ENCODE measurements at regions of chr15 and their contacts with region 1.

Region 1: GRCh38 chr15:90036343-90037210 is 35.5 kb downstream of the ZNF710 start:
- DNase-seq: no peak
- H3K4me3 ChIP-seq: no peak overlapping the region
- H3K27ac ChIP-seq: no peak overlapping the region
- H3K4me1 ChIP-seq: peaks cover 52% of the 10 kb centered on the region
- CTCF ChIP-seq: no peak

Region 2: GRCh38 chr15:90184786-90185569 is 148.4 kb after region 1 on chr15:
- CTCF ChIA-PET with region 1: no interaction called
- POLR2A ChIA-PET with region 1: no interaction called
- intact Hi-C with region 1: no loop called
- DNase-seq: peak; percentile 73
- H3K4me3 ChIP-seq: peak overlapping the region; percentile 77
- H3K27ac ChIP-seq: no peak overlapping the region
- H3K4me1 ChIP-seq: peaks cover 33% of the 10 kb centered on the region
- CTCF ChIP-seq: no peak

Region 3: DNA sequence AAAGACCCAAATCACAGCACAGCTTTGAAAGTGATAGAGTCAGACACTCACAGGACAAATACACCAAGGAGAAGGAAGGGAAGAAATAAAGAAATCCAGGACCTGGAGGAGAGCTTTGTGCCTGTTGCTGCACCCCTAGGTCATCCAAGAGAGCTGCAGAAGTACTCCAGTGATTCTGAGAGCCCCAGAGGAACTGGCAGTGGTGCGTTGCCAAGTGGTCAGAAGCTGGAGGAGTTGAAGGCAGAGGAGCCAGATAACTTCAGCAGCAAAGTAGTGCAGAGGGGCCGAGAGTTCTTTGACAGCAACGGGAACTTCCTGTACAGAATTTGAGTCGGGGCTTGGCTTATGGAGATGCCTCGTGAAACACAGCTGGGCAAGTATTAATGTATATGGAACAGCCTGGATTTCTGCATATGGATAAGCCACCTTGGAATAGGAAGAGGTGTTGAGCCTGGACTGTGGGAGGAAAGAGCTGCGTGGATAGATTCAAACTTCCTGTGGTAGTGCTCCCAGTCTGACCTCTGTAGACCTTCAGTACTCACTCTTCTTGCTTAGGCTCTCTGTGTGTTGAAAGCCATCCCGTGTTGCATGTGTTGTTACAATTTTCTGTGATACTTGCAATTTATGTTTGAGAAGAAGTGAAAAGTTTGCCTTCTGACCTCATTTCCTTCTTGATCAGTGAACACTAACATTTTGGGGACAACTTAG is 235.0 kb after region 1 on chr15:
- CTCF ChIA-PET with region 1: interaction called, 14 read pairs
- POLR2A ChIA-PET with region 1: no interaction called
- intact Hi-C with region 1: no loop called
- DNase-seq: no peak
- H3K4me3 ChIP-seq: no peak overlapping the region
- H3K27ac ChIP-seq: no peak overlapping the region
- H3K4me1 ChIP-seq: peaks cover 26% of the 10 kb centered on the region
- CTCF ChIP-seq: no peak